Activated CD4-positive, alpha-beta T cell treated with anti-CD3 and anti-CD28 coated beads for 36 hours (primary cell): ENCODE measurements at regions of chr7 and their contacts with region 1.

Region 1: GRCh38 chr7:31134246-31135188 is 82.4 kb downstream of the ADCYAP1R1 start:
- DNase-seq: peak; percentile 73
- ATAC-seq: peak; percentile 64
- H3K4me3 Mint-ChIP-seq: no peak overlapping the region
- H3K27ac Mint-ChIP-seq: no peak overlapping the region
- H3K4me1 Mint-ChIP-seq: no peaks in the 10 kb centered on the region
- H3K27me3 Mint-ChIP-seq: peaks cover 2% of the 10 kb centered on the region

Region 2: GRCh38 chr7:31122649-31123058 is 11.9 kb before region 1 on chr7:
- CTCF ChIA-PET with region 1: interaction called, 72 read pairs
- POLR2A ChIA-PET with region 1: no interaction called
- intact Hi-C with region 1: no loop called
- DNase-seq: peak; percentile 67
- ATAC-seq: peak; percentile 61
- H3K4me3 Mint-ChIP-seq: no peak overlapping the region
- H3K27ac Mint-ChIP-seq: no peak overlapping the region
- H3K4me1 Mint-ChIP-seq: no peaks in the 10 kb centered on the region
- H3K27me3 Mint-ChIP-seq: peaks cover 4% of the 10 kb centered on the region

Region 3: DNA sequence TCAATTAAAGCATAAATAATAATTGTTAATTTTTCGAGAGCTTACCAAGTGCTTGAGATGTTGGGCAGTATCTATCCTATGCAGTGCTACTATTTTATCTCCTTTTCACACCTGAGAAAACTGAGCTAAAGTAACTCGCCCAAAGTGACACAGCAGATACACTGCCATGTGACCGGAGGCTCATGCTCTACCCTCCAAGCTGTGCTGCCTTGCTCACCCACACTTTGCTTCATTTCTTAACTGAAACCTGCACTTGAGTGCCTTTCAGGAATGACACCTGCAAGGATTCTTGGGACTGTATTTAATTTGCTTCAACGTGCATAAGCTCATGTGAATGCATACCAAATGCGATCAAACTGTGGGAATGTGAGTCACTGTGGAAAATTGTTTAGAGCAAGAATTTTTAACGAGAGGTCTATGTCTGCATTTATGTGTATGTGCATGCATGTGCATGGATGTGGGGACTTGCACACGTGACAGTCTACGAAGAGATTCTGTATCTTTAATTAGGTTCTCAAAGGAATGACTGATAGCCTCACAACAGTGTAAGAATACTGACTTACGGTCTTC is 36.8 kb after region 1 on chr7:
- CTCF ChIA-PET with region 1: no interaction called
- POLR2A ChIA-PET with region 1: no interaction called
- intact Hi-C with region 1: no loop called
- DNase-seq: no peak
- ATAC-seq: no peak
- H3K4me3 Mint-ChIP-seq: no peak overlapping the region
- H3K27ac Mint-ChIP-seq: no peak overlapping the region
- H3K4me1 Mint-ChIP-seq: no peaks in the 10 kb centered on the region
- H3K27me3 Mint-ChIP-seq: peaks cover 8% of the 10 kb centered on the region

Region 4: DNA sequence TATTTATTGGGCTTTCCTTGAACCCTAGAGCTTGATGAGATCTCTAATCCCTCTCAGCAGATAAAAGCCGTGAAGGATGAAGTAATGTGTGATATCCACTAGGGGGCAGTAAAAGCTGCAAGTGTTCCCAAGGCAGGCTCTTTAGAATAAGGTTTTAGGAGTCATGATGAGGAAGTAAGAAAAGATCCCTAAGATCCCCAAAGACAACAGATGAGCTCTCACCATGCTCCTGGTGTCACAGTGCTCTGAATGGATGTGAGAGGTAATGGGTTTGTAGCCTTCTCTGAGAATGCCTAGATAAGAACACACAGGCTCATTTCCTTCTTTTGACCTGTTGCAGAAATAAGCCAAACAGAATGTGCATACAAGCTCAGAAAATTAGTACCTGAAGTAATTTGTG is 308.9 kb after region 1 on chr7:
- CTCF ChIA-PET with region 1: interaction called, 12 read pairs
- POLR2A ChIA-PET with region 1: no interaction called
- intact Hi-C with region 1: no loop called
- DNase-seq: no peak
- ATAC-seq: no peak
- H3K4me3 Mint-ChIP-seq: no peak overlapping the region
- H3K27ac Mint-ChIP-seq: no peak overlapping the region
- H3K4me1 Mint-ChIP-seq: no peaks in the 10 kb centered on the region
- H3K27me3 Mint-ChIP-seq: peaks cover 4% of the 10 kb centered on the region

Region 5: DNA sequence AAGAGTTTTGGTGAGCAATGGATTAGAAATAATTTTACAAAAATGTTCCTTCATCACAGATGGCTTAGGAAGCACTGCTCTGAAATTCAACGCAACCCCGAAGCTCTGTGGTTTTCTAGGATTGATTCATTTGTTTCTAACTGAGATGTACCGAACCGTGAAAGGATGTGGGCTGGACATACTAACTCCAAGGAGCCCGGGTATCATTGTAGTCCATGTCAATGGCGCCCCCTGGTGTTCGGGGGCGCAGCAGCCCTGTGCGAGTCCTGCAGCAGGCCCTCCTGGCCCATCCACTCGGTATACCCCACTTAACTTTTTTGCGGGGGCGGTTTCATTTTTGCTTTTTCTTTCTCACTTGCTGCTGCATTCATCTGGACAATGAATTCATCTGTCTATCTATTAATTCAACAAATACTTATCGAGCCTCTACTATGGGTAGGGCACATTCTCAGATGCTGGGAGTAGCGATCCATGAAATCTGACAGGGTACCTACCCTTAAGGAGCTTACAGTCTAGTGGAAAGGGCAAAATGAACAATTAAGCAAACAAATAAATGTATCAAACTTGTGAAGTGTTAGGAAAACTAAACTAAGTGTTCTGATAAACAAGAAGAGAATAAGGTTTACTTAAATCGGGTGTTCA is 354.2 kb after region 1 on chr7:
- CTCF ChIA-PET with region 1: interaction called, 13 read pairs
- POLR2A ChIA-PET with region 1: no interaction called
- intact Hi-C with region 1: loop called in 1 of 2 experiments (anchors 1 kb)
- DNase-seq: peak; percentile 72
- ATAC-seq: peak; percentile 68
- H3K4me3 Mint-ChIP-seq: no peak overlapping the region
- H3K27ac Mint-ChIP-seq: no peak overlapping the region
- H3K4me1 Mint-ChIP-seq: no peaks in the 10 kb centered on the region
- H3K27me3 Mint-ChIP-seq: no peaks in the 10 kb centered on the region

Region 6: GRCh38 chr7:31633894-31634494 is 499.5 kb after region 1 on chr7:
- CTCF ChIA-PET with region 1: interaction called, 12 read pairs
- POLR2A ChIA-PET with region 1: no interaction called
- intact Hi-C with region 1: loop called in 1 of 2 experiments (anchors 1 kb)
- DNase-seq: peak; percentile 12
- ATAC-seq: no peak
- H3K4me3 Mint-ChIP-seq: no peak overlapping the region
- H3K27ac Mint-ChIP-seq: no peak overlapping the region
- H3K4me1 Mint-ChIP-seq: no peaks in the 10 kb centered on the region
- H3K27me3 Mint-ChIP-seq: no peaks in the 10 kb centered on the region

Region 7: DNA sequence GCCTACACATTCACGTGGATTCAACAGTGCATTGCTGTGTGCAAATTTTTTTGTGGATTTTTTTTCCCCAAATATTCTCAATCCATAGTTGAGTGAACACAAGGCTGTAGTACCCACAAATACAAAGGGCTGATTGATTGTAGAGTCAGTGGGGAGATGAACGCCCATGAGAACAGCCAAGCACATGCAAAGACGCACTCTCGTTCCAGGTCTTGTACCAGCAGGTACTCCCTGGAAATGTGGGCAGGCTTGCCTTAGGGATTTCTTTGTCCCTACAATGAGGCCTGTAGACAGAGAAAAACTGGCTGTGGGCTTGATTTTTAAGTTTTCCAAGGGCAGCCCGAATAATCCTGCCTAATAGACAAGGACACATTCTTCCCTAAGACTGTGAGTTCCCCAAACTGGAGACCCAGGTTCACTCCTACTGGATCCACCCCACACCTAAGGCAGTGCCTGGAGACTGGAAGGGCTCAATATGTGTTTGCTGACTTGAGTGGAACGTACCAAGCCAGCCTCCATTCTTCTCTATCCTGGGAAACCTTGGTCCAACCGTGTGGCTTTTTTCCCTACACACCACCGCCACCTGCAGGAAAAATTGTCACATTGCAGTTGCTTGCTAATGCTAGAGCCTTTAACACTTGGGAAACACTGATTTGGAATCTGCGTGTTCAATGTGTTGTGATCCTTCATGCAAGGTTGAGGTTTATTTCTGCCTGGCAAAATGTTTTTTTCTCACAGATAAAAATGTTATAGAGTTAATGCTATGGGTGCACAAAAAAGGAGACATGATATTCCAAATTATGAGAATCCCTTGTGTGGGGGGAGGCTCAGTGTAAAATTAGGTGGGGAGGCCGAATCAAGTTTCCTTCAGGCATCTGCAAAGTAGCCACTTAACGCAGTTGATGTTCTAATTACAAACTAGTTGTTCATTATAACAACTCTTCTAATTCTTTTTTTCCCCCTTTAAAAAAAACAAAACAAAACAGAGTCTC is 601.8 kb after region 1 on chr7:
- CTCF ChIA-PET with region 1: interaction called, 3 read pairs
- POLR2A ChIA-PET with region 1: no interaction called
- intact Hi-C with region 1: loop called (anchors 1 to 5 kb)
- DNase-seq: peak; percentile 27
- ATAC-seq: no peak
- H3K4me3 Mint-ChIP-seq: no peak overlapping the region
- H3K27ac Mint-ChIP-seq: no peak overlapping the region
- H3K4me1 Mint-ChIP-seq: no peaks in the 10 kb centered on the region
- H3K27me3 Mint-ChIP-seq: peaks cover 3% of the 10 kb centered on the region

Region 8: DNA sequence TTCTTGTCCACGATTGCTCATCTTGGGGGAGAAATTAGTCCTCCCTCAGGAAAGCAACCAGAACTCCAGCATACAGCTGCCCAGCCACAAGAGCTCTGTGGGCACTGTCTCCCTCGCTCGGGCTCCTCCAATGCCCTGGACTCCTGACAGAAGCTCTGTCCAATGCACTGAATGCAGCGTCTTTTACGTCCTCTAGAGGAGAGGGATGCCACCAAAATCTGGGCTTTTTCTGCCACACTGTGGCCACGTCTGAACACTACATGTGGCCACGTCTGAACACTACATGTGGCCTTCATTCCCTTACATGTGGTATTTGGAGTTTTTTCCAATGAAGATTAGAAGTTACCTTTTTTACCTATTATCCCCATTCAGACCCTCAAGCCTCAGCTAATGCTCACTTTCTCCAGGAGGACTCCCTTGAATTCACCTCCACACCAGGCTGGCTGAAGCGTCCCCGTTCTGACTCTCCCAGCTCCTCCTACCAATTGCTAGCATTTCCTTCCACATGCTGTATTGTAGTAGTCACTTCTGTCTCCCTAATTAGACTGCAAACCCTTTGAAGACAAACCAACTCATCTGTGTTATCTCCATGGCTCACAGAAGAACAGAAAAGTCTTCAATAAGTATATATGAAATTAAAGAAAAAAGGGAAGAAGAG is 1070.0 kb after region 1 on chr7:
- CTCF ChIA-PET with region 1: no interaction called
- POLR2A ChIA-PET with region 1: no interaction called
- intact Hi-C with region 1: loop called in 1 of 2 experiments (anchors 5 kb)
- DNase-seq: peak; percentile 34
- ATAC-seq: no peak
- H3K4me3 Mint-ChIP-seq: no peak overlapping the region
- H3K27ac Mint-ChIP-seq: no peak overlapping the region
- H3K4me1 Mint-ChIP-seq: no peaks in the 10 kb centered on the region
- H3K27me3 Mint-ChIP-seq: peaks cover 3% of the 10 kb centered on the region